Activated naive CD4-positive, alpha-beta T cell treated with anti-CD3 and anti-CD28 coated beads for 36 hours (primary cell): ENCODE measurements at regions of chr2 and their contacts with region 1.

Region 1: GRCh38 chr2:69717861-69718273 is 24.1 kb upstream of the ANXA4 start:
- DNase-seq: no peak
- H3K4me3 Mint-ChIP-seq: no peak overlapping the region
- H3K27ac Mint-ChIP-seq: no peak overlapping the region
- H3K4me1 Mint-ChIP-seq: peaks cover 6% of the 10 kb centered on the region
- H3K27me3 Mint-ChIP-seq: no peaks in the 10 kb centered on the region

Region 2: GRCh38 chr2:69026026-69026425 is 691.8 kb before region 1 on chr2:
- CTCF ChIA-PET with region 1: no interaction called
- intact Hi-C with region 1: loop called (anchors 1 kb)
- DNase-seq: peak; percentile 60
- H3K4me3 Mint-ChIP-seq: no peak overlapping the region
- H3K27ac Mint-ChIP-seq: no peak overlapping the region
- H3K4me1 Mint-ChIP-seq: no peaks in the 10 kb centered on the region
- H3K27me3 Mint-ChIP-seq: peaks cover 6% of the 10 kb centered on the region

Region 3: GRCh38 chr2:69306822-69307578 is 410.9 kb before region 1 on chr2:
- CTCF ChIA-PET with region 1: no interaction called
- intact Hi-C with region 1: loop called (anchors 5 kb)
- DNase-seq: peak; percentile 76
- H3K4me3 Mint-ChIP-seq: peak overlapping the region; percentile 67
- H3K27ac Mint-ChIP-seq: no peak overlapping the region
- H3K4me1 Mint-ChIP-seq: peaks cover 2% of the 10 kb centered on the region
- H3K27me3 Mint-ChIP-seq: peaks cover 20% of the 10 kb centered on the region

Region 4: DNA sequence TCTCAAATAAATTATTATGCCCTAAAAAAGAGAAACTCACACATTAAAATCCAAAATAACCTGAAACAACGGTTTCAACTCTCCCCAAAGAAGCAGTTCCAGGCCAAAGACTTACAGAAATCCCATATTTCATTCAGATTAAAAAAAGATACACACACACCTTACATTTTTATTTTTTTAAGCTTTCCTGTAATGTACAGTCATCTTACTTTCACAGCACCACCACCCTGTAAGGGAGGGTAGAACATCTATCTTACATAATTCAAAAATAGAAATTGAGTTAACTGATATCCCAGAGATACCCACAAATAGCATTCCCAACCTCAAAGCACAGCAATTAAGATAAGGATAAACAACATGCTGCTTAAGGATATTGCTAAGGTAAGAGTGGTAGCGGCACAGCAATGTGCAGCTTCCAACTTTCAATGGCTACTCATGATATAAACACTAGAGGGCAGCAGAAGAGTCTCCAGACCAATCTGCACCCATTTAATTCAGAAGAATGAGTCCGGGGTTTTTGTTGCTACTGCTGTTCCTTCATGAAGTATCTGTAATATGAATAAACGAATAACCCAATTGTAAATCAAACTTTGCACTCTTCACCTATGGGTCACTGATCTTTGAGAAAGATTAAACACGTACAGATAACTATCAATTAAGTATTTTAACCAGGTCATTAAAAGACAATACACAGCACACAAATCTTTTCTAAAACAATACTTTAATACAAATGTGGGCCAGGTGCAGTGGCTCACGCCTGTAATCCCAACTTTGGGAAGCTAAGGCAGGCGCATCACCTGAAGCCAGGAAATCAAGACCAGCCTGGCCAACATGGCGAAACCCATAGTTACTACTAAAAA is 342.1 kb before region 1 on chr2:
- CTCF ChIA-PET with region 1: interaction called, 14 read pairs
- intact Hi-C with region 1: loop called (anchors 1 kb)
- DNase-seq: no peak
- H3K4me3 Mint-ChIP-seq: no peak overlapping the region
- H3K27ac Mint-ChIP-seq: no peak overlapping the region
- H3K4me1 Mint-ChIP-seq: peaks cover 15% of the 10 kb centered on the region
- H3K27me3 Mint-ChIP-seq: no peaks in the 10 kb centered on the region

Region 5: DNA sequence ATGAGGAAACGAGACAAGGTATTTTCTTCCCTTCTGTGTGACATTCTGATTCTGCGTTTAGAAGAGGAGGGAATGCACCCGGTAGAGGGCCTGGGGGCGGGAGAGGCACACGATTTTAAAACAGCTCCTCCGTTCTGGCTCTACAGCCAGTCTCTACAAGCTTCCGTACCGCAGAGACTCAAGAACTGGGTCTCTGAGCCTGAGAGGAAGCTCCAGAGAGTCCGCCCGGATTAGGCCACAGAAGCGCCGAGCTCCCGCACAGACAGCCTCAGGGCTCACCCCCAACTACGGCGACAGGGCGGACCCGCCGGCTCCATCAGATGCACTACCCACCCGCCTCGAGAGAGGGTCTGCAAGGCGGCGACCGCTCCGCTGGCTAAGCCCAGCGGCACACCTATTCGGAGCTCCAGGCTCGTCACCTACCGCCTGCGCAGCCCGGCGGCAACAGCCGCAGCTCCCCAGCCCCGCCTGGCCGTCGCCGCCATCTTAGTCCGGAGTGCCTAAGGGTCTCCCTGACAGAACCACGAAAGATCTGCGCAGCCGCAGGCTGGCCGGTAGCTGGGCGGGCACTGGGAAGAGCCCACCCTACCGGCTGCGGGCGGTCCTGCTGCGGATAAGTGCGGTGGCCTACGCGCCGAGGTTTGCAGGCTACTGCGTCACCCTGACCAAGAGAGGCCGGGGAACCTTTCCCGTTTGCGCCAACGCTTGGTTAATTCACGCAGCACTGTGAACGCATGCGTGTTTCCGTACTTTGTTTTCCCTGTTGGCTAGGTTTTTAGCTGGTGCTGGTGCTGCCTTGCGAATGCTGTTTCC is 280.7 kb before region 1 on chr2 and contains the start of gene NFU1:
- CTCF ChIA-PET with region 1: interaction called, 5 read pairs
- intact Hi-C with region 1: loop called (anchors 1 kb)
- DNase-seq: peak; percentile 90
- H3K4me3 Mint-ChIP-seq: peak within 1 kb of the TSS; percentile 95
- H3K27ac Mint-ChIP-seq: peak within 1 kb of the TSS; percentile 94
- H3K4me1 Mint-ChIP-seq: peaks cover 29% of the 10 kb centered on the region
- H3K27me3 Mint-ChIP-seq: no peaks in the 10 kb centered on the region
- total RNA-seq, gene NFU1: 35.7 to 39.3 TPM

Region 6: GRCh38 chr2:69559442-69560146 is 158.3 kb before region 1 on chr2:
- CTCF ChIA-PET with region 1: interaction called, 47 read pairs
- intact Hi-C with region 1: loop called (anchors 1 kb)
- DNase-seq: no peak
- H3K4me3 Mint-ChIP-seq: no peak overlapping the region
- H3K27ac Mint-ChIP-seq: peak overlapping the region; percentile 34
- H3K4me1 Mint-ChIP-seq: peaks cover 78% of the 10 kb centered on the region
- H3K27me3 Mint-ChIP-seq: no peaks in the 10 kb centered on the region